Ovary (tissue), 10 donors: ENCODE measurements at regions of chr14 and their contacts with region 1.

Region 1: GRCh38 chr14:51989293-51990234 is at the start of gene RTRAF:
- DNase-seq: peak; percentile 91 to 96 (median 93)
- H3K4me3 ChIP-seq: peak within 1 kb of the TSS; percentile 81
- H3K27ac ChIP-seq: peak within 1 kb of the TSS; percentile 61 to 78
- H3K4me1 ChIP-seq: peaks cover 3% of the 10 kb centered on the region
- H3K27me3 ChIP-seq: no peaks in the 10 kb centered on the region
- CTCF ChIP-seq: peak in 1 of 3 donors; percentile 11
- EP300 ChIP-seq: no peak
- POLR2A ChIP-seq: peak; percentile 70
- total RNA-seq, gene RTRAF: 47.4 to 198 (median 157) TPM

Region 2: GRCh38 chr14:52068615-52069303 is 79.2 kb after region 1 on chr14 and contains the start of gene NID2:
- intact Hi-C with region 1: loop called in 1 of 4 experiments (anchors 5 kb)
- DNase-seq: peak; percentile 92 to 94 (median 92)
- H3K4me3 ChIP-seq: peak within 1 kb of the TSS; percentile 73
- H3K27ac ChIP-seq: peak within 1 kb of the TSS; percentile 81 to 88
- H3K4me1 ChIP-seq: peaks cover 4% of the 10 kb centered on the region
- H3K27me3 ChIP-seq: no peaks in the 10 kb centered on the region
- CTCF ChIP-seq: peak in 1 of 3 donors; percentile 6
- EP300 ChIP-seq: no peak
- POLR2A ChIP-seq: peak; percentile 69
- total RNA-seq, gene NID2: 31.5 to 55.8 (median 42.7) TPM

Region 3: DNA sequence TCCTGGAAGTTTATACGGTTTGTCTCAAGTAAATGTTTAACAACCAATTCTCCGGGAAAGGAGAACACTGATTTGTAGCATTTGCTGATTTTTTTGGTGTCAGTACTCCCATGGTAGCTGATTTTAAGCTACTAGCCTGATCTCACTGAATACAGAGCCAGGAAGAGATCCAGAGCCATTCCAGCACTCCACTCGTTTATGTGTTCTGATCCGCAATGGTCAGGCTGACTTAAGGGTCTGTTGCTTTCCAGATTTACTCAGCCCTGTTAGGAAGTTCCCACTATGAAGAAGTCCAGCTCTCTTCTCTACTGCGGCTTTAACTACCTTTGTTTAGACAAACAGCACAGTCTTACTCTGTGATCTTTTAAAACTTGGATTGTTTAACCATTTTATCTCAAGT is 117.3 kb after region 1 on chr14:
- intact Hi-C with region 1: no loop called
- DNase-seq: no peak
- H3K4me3 ChIP-seq: no peak overlapping the region
- H3K27ac ChIP-seq: no peak overlapping the region
- H3K4me1 ChIP-seq: peaks cover 2% of the 10 kb centered on the region
- H3K27me3 ChIP-seq: no peaks in the 10 kb centered on the region
- CTCF ChIP-seq: no peak
- EP300 ChIP-seq: no peak
- POLR2A ChIP-seq: no peak

Region 4: DNA sequence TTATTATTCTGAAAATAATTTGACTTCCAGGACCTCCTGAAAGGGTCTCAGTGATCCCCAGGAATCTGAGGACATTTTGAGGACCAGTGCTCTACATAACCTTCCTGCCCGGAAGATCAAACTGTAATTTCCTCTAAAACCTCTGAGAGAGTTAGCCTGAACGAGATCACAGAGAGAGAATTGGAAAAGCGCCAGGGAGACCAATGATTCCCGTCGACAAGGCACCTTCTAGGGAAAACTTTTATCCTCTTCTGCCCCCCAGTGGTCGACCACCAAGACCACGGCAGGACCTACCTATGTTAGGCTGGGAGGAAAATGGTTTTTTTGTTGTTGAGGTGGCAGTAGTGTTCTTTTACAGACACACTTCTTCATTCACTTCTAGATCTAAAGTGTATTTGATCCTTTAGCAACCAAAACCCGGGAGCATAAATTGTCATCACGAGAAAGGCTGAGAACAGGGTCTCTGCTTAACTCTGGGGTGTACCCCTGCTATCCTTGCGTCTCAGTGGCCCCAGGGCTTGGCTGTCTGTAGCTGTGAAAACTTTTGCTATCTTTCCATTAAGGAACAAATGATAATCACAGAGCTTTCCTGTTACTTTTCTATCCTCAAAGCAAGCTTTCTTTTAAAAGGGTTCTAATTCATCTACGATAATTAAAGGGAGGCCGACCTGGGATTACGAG is 142.2 kb after region 1 on chr14:
- intact Hi-C with region 1: loop called in 1 of 4 experiments (anchors 5 kb)
- DNase-seq: peak; percentile 81 to 90 (median 85)
- H3K4me3 ChIP-seq: no peak overlapping the region
- H3K27ac ChIP-seq: no peak overlapping the region
- H3K4me1 ChIP-seq: peaks cover 2% of the 10 kb centered on the region
- H3K27me3 ChIP-seq: no peaks in the 10 kb centered on the region
- CTCF ChIP-seq: peak; percentile 62 to 79 (median 70)
- EP300 ChIP-seq: no peak
- POLR2A ChIP-seq: no peak

Region 5: GRCh38 chr14:52313903-52314594 is 324.5 kb after region 1 on chr14 and contains the start of gene PTGER2:
- intact Hi-C with region 1: loop called in 1 of 4 experiments (anchors 5 kb)
- DNase-seq: peak; percentile 85 to 92 (median 88)
- H3K4me3 ChIP-seq: peak within 1 kb of the TSS; percentile 45
- H3K27ac ChIP-seq: peak within 1 kb of the TSS; percentile 57 to 61
- H3K4me1 ChIP-seq: peaks cover 7% of the 10 kb centered on the region
- H3K27me3 ChIP-seq: no peaks in the 10 kb centered on the region
- CTCF ChIP-seq: no peak
- EP300 ChIP-seq: no peak
- POLR2A ChIP-seq: no peak
- total RNA-seq, gene PTGER2: 0.86 to 15.6 (median 6.7) TPM